ENCODE measurements at regions of chr10 and their contacts with region 1.

Region 1: DNA sequence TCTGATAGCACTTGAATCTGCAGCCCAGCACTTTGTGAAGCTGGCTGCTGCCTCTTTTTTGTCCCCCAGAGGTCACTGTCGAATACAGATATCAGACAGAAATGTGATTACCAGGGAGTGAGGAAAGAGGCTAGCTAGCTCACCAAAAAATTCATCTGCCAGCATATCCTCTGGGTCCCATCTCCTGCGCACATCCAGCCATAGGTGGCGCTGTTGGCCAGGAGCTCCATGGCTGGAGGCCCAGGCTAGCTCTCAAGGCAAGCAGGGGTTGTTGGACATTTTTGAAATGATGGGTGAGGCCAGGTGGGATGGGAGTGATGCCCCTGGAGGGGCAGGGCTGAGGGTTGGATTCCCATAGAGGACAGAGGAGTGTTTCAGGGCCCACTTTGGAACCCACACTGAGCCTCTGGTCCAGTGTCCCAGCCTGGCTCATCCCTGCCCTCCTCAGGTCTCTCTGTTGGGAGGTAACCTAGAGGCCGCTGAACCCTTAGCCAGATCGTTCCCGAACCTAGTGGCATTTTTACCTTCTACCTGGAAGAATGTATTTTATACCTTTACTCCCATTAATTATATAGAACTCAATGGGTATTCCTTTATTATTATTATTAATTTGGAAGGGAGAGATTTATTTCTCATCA is 14.8 kb downstream of the DPCD start:
- DNase-seq: peak; percentile 56
- H3K4me3 ChIP-seq: no peak overlapping the region
- H3K27ac ChIP-seq: no peak overlapping the region
- H3K4me1 ChIP-seq: no peaks in the 10 kb centered on the region
- H3K27me3 ChIP-seq: no peaks in the 10 kb centered on the region
- CTCF ChIP-seq: peak; percentile 82 to 95
- POLR2A ChIP-seq: no peak

Region 2: DNA sequence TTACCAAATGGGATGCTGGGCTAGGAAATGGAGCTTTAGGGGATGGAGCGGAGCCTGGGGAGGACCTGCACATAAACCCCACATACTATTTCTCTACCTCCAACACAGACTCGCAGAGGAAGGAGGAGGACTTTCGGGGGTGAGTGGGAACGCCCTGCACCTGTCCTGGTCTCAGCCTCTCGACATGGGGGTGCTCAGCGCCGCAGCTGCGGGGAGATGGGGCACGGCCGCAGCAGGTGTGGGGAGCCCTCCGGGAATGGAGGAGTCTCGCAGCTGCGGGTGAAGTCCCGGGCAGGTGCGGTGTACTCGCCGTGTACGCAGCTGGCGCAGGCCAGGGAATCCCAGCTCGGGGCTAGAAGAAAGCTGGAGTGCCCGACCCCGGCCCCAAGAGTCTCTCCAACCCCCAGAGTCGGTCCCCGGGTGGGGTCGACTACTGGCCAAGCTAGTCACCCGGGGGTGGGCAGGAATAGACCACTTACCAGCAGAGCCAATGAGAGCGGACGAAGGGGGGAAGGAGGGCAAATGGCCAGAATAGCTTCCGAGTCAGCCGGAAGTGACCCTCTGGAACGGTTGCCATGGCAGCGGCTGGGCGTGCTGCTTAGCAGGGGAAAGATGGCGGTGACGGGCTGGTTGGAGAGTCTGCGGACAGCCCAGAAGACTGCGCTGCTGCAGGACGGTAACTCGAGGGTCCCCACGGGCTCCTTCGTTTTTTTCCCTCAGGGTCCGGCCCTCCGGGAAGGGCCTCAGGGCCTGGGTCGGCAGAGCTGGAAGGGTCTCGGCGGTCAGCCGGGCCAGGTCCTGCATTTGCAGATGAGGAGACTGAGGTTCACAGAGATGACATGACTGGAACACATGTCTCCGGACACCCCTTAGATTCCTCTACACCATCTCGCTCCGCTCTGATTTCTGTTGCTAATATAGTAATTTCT is 14.9 kb before region 1 on chr10 and contains the starts of genes DPCD and POLL:
- CTCF ChIA-PET with region 1: interaction called, 15 read pairs
- POLR2A ChIA-PET with region 1: no interaction called
- dilution Hi-C with region 1: no loop called
- intact Hi-C with region 1: no loop called
- DNase-seq: peak; percentile 95
- H3K4me3 ChIP-seq: peak within 1 kb of the TSS; percentile 75 to 88 (median 81)
- H3K27ac ChIP-seq: peak within 1 kb of the TSS; percentile 3
- H3K4me1 ChIP-seq: peaks cover 18% of the 10 kb centered on the region
- H3K27me3 ChIP-seq: no peaks in the 10 kb centered on the region
- CTCF ChIP-seq: no peak
- POLR2A ChIP-seq: peak; percentile 60
- total RNA-seq, gene DPCD: 21.3 and 25.3 TPM in 2 replicates
- total RNA-seq, gene POLL: 27.4 and 34.3 TPM in 2 replicates

Region 3: GRCh38 chr10:101693978-101694673 is 91.2 kb after region 1 on chr10:
- CTCF ChIA-PET with region 1: interaction called, 9 read pairs
- POLR2A ChIA-PET with region 1: no interaction called
- dilution Hi-C with region 1: no loop called
- intact Hi-C with region 1: loop called (anchors 2 kb)
- DNase-seq: peak; percentile 68
- H3K4me3 ChIP-seq: peak overlapping the region; percentile 52 to 95 (median 77)
- H3K27ac ChIP-seq: peak overlapping the region; percentile 82
- H3K4me1 ChIP-seq: peaks cover 14% of the 10 kb centered on the region
- H3K27me3 ChIP-seq: no peaks in the 10 kb centered on the region
- CTCF ChIP-seq: no peak
- POLR2A ChIP-seq: peak; percentile 87

Region 4: GRCh38 chr10:101774589-101775272 is 171.9 kb after region 1 on chr10:
- CTCF ChIA-PET with region 1: interaction called, 24 read pairs
- POLR2A ChIA-PET with region 1: no interaction called
- dilution Hi-C with region 1: no loop called
- intact Hi-C with region 1: no loop called
- DNase-seq: no peak
- H3K4me3 ChIP-seq: no peak overlapping the region
- H3K27ac ChIP-seq: no peak overlapping the region
- H3K4me1 ChIP-seq: peaks cover 10% of the 10 kb centered on the region
- H3K27me3 ChIP-seq: peaks cover 58 to 75% of the 10 kb centered on the region in 2 experiments
- CTCF ChIP-seq: no peak
- POLR2A ChIP-seq: no peak